PC-9 (cell line): ENCODE measurements at regions of chr19 and their contacts with region 1.

Region 1: DNA sequence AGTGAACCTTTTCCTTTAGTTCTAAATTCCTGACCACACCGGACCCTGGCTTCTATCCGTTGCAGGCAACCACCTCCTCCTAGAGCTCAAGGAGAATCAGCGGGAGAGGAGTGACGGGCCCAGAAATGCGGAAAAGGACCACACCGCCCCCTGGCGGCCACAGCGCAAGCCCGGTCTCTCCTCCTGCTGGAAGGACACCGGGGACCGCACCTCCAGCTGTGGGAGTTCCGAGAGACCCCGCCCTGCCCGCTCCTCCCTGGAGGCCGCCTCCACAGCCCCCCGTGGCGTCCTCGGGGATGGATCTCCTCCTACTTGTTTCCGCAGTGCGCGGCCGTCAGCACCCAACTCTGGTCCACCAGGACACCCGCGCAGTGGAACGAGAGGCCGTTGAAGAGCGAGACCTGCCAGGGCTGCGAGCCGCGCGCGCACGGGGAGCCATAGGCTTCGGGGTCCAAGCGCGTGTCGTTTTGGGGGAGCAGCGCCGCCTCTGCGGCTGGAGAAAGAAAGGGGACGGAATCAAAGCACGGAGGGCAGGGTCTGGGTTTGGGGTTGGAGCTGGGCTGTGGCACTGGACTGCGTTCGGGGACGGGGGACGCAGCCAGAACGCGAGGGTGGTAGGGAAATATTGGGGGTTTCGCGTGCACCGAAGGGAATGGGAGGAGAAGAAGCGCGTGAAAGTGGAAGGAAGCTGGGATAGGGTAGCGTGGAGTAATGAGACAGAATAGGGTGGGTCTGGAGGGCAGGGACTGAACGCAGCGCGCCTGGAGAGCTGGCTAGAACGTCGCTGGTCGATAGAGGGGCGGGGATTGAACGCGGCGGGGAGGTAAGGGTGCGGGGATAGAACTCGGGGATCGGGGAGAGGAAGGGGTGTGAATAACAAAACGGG is 2.5 kb downstream of the KLK10 start:
- DNase-seq: peak; percentile 88 to 97
- H3K4me3 ChIP-seq: peak overlapping the region; percentile 79
- H3K27ac ChIP-seq: peak overlapping the region; percentile 81
- H3K4me1 ChIP-seq: peaks cover 19% of the 10 kb centered on the region
- H3K27me3 ChIP-seq: no peaks in the 10 kb centered on the region
- CTCF ChIP-seq: peak; percentile 99

Region 2: GRCh38 chr19:50804420-50805272 is 212.4 kb before region 1 on chr19:
- CTCF ChIA-PET with region 1: interaction called, 7 read pairs
- POLR2A ChIA-PET with region 1: no interaction called
- intact Hi-C with region 1: loop called (anchors 10 kb)
- DNase-seq: peak; percentile 96 to 98
- H3K4me3 ChIP-seq: peak overlapping the region; percentile 76
- H3K27ac ChIP-seq: peak overlapping the region; percentile 84
- H3K4me1 ChIP-seq: peaks cover 20% of the 10 kb centered on the region
- H3K27me3 ChIP-seq: no peaks in the 10 kb centered on the region
- CTCF ChIP-seq: no peak

Region 3: GRCh38 chr19:50933640-50934039 is 83.4 kb before region 1 on chr19:
- CTCF ChIA-PET with region 1: interaction called, 4 read pairs
- POLR2A ChIA-PET with region 1: interaction called, 6 read pairs
- intact Hi-C with region 1: loop called (anchors 1 kb)
- DNase-seq: peak; percentile 52 to 93
- H3K4me3 ChIP-seq: no peak overlapping the region
- H3K27ac ChIP-seq: peak overlapping the region; percentile 89
- H3K4me1 ChIP-seq: peaks cover 43% of the 10 kb centered on the region
- H3K27me3 ChIP-seq: no peaks in the 10 kb centered on the region
- CTCF ChIP-seq: no peak

Region 4: DNA sequence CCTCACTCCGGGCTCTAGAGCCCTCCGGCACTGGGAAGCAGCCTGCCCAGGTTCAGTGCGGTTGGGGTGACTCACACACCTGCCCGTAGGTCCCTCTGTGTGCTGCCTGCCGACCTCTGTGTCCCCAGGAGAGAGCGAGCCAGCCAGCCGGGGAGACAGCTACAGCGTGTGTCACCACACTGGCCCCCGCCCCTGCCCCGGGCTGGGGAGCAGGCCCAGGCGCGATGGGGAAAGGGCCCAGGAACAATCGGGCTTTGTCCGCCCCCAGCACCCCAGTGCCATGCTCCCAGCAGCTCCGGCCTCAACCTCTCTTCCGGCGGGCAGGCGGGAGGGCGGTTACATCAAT is 47.7 kb before region 1 on chr19 and contains the start of gene KLK6:
- CTCF ChIA-PET with region 1: interaction called, 6 read pairs
- POLR2A ChIA-PET with region 1: interaction called, 34 read pairs
- intact Hi-C with region 1: loop called (anchors 1 kb)
- DNase-seq: peak; percentile 97 to 99
- H3K4me3 ChIP-seq: peak within 1 kb of the TSS; percentile 76
- H3K27ac ChIP-seq: peak within 1 kb of the TSS; percentile 92
- H3K4me1 ChIP-seq: peaks cover 79% of the 10 kb centered on the region
- H3K27me3 ChIP-seq: no peaks in the 10 kb centered on the region
- CTCF ChIP-seq: no peak
- total RNA-seq, gene KLK6: 490 and 581 TPM in 2 replicates

Region 5: DNA sequence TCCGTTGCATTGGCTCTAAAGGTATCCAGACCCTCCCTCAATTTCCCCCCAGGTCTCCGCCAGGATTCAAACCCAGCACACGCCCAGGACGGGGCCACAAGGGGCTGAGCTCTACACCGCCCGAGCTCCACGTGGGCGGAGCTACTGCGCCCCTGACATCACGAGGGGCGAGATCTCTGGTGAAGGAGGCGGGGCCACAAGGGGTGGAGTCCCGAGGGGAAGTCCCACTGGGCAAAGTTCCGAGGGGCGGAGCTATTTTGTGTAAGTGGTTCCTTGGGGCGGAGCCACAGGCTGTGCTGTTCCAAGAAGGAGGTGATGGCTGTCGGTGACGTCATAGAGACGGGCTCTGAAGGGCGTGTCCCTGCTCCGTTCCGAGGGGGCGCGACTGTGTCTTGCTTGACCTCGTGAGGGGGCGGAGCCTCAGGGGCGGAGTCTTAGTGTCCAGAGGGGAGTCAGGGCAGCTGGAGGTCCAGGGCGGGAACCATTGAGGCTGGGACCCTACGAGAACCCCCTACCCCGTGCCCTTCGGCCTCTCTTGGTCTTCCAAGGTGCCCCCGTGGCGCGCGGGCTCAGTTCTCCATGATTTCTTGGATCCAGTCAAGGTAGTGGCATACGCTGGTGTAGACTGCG is 14.4 kb before region 1 on chr19:
- CTCF ChIA-PET with region 1: interaction called, 20 read pairs
- POLR2A ChIA-PET with region 1: interaction called, 22 read pairs
- intact Hi-C with region 1: loop called (anchors 1 kb)
- DNase-seq: peak; percentile 94 to 98
- H3K4me3 ChIP-seq: peak overlapping the region; percentile 64
- H3K27ac ChIP-seq: peak overlapping the region; percentile 66
- H3K4me1 ChIP-seq: peaks cover 8% of the 10 kb centered on the region
- H3K27me3 ChIP-seq: no peaks in the 10 kb centered on the region
- CTCF ChIP-seq: no peak

Region 6: GRCh38 chr19:51097166-51097738 is 80.2 kb after region 1 on chr19:
- CTCF ChIA-PET with region 1: interaction called, 14 read pairs
- POLR2A ChIA-PET with region 1: no interaction called
- intact Hi-C with region 1: loop called (anchors 1 kb)
- DNase-seq: peak; percentile 62 to 69
- H3K4me3 ChIP-seq: no peak overlapping the region
- H3K27ac ChIP-seq: no peak overlapping the region
- H3K4me1 ChIP-seq: no peaks in the 10 kb centered on the region
- H3K27me3 ChIP-seq: no peaks in the 10 kb centered on the region
- CTCF ChIP-seq: peak; percentile 85

Region 7: GRCh38 chr19:51338563-51339312 is 321.7 kb after region 1 on chr19:
- CTCF ChIA-PET with region 1: no interaction called
- POLR2A ChIA-PET with region 1: interaction called, 14 read pairs
- intact Hi-C with region 1: no loop called
- DNase-seq: peak; percentile 65 to 85
- H3K4me3 ChIP-seq: peak overlapping the region; percentile 84
- H3K27ac ChIP-seq: no peak overlapping the region
- H3K4me1 ChIP-seq: peaks cover 21% of the 10 kb centered on the region
- H3K27me3 ChIP-seq: no peaks in the 10 kb centered on the region
- CTCF ChIP-seq: peak; percentile 97